Head of caudate nucleus (tissue), 42 donors: ENCODE measurements at regions of chr10 and their contacts with region 1.

Region 1: DNA sequence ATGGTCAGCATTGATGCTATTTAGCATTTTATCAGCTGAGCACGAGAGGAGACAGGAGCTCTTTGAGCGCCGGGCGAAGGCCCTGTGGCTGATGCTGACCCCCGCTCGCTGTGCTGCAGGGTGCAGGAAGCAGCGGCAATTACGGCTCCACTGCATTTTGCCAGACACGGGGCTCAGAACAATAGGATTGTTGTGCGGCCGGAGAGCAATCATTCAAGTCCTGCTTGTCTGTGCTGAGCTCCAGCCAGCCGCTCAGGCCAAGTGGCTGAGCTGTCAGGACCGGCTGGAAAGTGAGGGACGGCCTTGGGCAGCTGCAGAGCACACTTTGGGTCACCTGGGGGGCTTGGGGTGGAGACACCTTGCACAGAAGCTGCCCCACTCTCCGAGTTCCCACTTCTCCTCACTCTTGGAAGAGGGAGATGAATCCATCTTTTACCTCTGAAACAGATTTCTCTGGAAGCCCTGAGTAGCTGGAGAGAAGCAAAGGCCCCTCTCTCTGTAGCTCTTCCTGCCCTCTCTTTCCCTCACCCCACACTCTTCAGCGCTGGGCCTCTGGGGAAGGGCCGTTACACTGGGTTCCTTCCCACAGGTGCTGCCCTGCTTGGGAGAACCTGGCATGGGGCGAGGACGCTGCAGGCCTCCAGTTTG is 17.3 kb upstream of the ADARB2 start:
- DNase-seq: peak; percentile 21 to 89 (median 74)

Region 2: GRCh38 chr10:1643161-1643907 is 111.3 kb before region 1 on chr10:
- intact Hi-C with region 1: no loop called
- DNase-seq: peak in 7 of 42 donors; percentile 13 to 60 (median 26)

Region 3: GRCh38 chr10:1737222-1738061 is 17.2 kb before region 1 on chr10 and contains the start of gene ADARB2:
- intact Hi-C with region 1: loop called (anchors 2 kb)
- DNase-seq: peak; percentile 47 to 90 (median 76)